ENCODE measurements at regions of chr7 and their contacts with region 1.

Region 1: DNA sequence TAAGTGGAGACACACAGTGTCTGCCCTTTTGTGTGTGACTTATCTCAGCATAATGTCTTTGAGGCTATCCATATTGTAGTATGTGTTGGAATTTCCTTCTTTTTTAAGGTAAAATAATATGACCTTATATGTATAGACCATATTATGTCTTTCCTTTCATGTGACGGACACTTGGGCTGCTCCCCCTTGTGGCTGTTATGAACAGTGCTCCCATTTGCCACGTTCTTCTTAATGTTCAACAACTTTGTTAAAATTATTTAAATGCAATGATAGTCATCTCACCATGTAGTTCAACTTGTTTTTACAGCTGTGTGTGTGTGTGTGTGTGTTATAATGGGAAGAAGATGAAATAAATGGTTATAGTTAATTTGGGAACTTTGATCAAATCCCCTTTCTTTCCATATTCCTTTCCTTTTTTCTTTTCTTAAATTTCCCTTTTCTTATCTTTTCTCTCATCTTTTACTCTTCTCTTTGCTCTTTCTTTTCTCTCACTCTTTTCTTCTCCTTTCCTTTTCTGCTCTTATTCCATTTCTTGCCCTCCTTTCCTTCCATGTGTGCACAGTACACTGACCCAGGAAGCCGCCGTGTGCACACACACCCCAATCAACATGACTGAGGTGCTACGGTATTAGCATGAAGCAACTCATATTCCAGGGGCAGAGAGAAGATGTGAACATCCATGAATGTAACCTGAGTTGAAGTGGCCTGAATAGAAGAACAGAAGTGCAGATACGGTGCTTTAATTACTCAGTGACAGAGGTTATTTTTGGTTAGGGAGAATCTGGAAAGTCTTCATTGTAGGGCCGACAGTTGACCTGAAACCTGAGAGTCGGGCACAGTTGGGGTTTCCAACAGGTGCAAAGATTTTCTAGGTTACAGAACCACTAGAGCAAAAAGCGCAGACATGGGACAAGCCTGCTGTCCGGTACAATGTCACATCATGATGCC is 596.7 kb downstream of the SDK1 start:
- DNase-seq: no peak
- H3K4me3 ChIP-seq: no peak overlapping the region
- H3K27ac ChIP-seq: no peak overlapping the region
- H3K4me1 ChIP-seq: no peaks in the 10 kb centered on the region
- H3K27me3 ChIP-seq: no peaks in the 10 kb centered on the region
- CTCF ChIP-seq: peak; percentile 85

Region 2: GRCh38 chr7:2863461-2864066 is 1034.1 kb before region 1 on chr7:
- intact Hi-C with region 1: loop called (anchors 10 kb)
- DNase-seq: peak; percentile 68
- H3K4me3 ChIP-seq: no peak overlapping the region
- H3K27ac ChIP-seq: peak overlapping the region; percentile 84
- H3K4me1 ChIP-seq: no peaks in the 10 kb centered on the region
- H3K27me3 ChIP-seq: no peaks in the 10 kb centered on the region
- CTCF ChIP-seq: no peak

Region 3: GRCh38 chr7:3300651-3301378 is 596.9 kb before region 1 on chr7 and contains the start of gene SDK1:
- intact Hi-C with region 1: loop called (anchors 5 kb)
- DNase-seq: peak; percentile 89
- H3K4me3 ChIP-seq: peak within 1 kb of the TSS; percentile 37
- H3K27ac ChIP-seq: no peak within 1 kb of the TSS
- H3K4me1 ChIP-seq: peaks cover 3% of the 10 kb centered on the region
- H3K27me3 ChIP-seq: peaks cover 10% of the 10 kb centered on the region
- CTCF ChIP-seq: peak; percentile 87
- total RNA-seq, gene SDK1: 1.3 to 2.6 TPM

Region 4: GRCh38 chr7:3695602-3696001 is 202.1 kb before region 1 on chr7:
- intact Hi-C with region 1: loop called (anchors 2 kb)
- DNase-seq: no peak
- H3K4me3 ChIP-seq: no peak overlapping the region
- H3K27ac ChIP-seq: no peak overlapping the region
- H3K4me1 ChIP-seq: no peaks in the 10 kb centered on the region
- H3K27me3 ChIP-seq: no peaks in the 10 kb centered on the region
- CTCF ChIP-seq: no peak

Region 5: DNA sequence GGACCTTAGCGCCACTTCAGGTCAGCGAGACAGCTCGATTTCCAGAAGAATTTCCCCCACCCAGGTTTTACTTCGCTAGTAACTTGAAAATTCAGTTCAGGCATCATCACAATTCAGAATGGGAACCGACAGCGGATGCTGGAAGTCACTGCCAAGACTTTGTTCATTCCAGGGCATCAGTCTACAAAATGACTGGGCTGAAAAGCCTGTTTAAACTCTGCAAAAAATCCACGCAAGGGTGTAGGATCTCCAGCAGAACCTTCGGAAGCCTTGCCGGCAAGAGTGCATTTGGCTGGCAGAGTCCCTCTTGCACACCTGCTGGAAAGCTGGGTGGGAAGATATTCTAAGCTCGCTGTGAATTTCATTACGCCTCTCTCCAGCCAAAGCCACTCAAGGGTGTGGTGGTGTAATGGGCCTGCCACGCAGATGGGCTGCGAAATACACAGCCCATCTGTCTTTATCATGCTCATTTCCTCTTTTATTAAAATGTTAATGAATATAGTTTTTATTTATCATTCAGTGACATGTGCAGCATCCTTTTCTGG is 112.4 kb after region 1 on chr7:
- intact Hi-C with region 1: no loop called
- DNase-seq: no peak
- H3K4me3 ChIP-seq: no peak overlapping the region
- H3K27ac ChIP-seq: no peak overlapping the region
- H3K4me1 ChIP-seq: no peaks in the 10 kb centered on the region
- H3K27me3 ChIP-seq: no peaks in the 10 kb centered on the region
- CTCF ChIP-seq: no peak